ENCODE measurements at regions of chr5 and their contacts with region 1.

Region 1: DNA sequence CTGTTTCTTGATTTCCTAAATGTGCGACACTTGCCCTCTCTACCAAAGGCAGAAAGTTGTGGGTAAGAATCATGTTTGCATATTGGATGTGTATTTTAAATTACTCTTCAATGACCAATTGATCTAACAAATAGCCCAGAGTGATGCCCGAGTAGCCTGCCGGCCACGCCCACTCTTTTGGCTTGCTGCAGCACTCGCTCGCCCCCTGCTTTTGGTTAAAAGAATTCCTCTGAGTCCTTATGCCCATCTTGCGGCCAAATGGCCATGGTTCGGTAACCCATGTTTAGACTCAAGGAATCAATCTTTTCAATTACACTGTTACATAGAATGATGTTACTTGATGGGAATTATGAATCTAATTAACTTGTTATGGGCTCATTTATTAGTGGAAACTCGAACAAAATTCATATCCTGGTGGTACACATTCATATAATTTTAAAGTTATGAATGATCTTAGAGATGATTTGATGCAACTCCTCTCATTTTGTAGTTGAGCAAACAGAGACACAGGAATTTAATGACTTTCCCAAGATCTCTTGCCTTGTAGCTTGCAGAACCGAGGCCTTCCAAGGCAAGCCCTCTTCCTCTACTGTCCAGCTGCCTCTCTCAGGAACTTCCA is 36.5 kb downstream of the PPIC start:
- DNase-seq: peak; percentile 60
- H3K4me3 Mint-ChIP-seq: no peak overlapping the region
- H3K27ac Mint-ChIP-seq: no peak overlapping the region
- H3K4me1 Mint-ChIP-seq: no peaks in the 10 kb centered on the region
- H3K27me3 Mint-ChIP-seq: no peaks in the 10 kb centered on the region

Region 2: GRCh38 chr5:122515709-122516431 is 484.2 kb before region 1 on chr5:
- CTCF ChIA-PET with region 1: no interaction called
- POLR2A ChIA-PET with region 1: no interaction called
- intact Hi-C with region 1: loop called (anchors 10 kb)
- DNase-seq: peak; percentile 10
- H3K4me3 Mint-ChIP-seq: no peak overlapping the region
- H3K27ac Mint-ChIP-seq: no peak overlapping the region
- H3K4me1 Mint-ChIP-seq: no peaks in the 10 kb centered on the region
- H3K27me3 Mint-ChIP-seq: no peaks in the 10 kb centered on the region

Region 3: GRCh38 chr5:122704243-122705036 is 295.6 kb before region 1 on chr5:
- CTCF ChIA-PET with region 1: interaction called, 5 read pairs
- POLR2A ChIA-PET with region 1: no interaction called
- intact Hi-C with region 1: loop called (anchors 10 kb)
- DNase-seq: no peak
- H3K4me3 Mint-ChIP-seq: no peak overlapping the region
- H3K27ac Mint-ChIP-seq: no peak overlapping the region
- H3K4me1 Mint-ChIP-seq: no peaks in the 10 kb centered on the region
- H3K27me3 Mint-ChIP-seq: peaks cover 5% of the 10 kb centered on the region

Region 4: DNA sequence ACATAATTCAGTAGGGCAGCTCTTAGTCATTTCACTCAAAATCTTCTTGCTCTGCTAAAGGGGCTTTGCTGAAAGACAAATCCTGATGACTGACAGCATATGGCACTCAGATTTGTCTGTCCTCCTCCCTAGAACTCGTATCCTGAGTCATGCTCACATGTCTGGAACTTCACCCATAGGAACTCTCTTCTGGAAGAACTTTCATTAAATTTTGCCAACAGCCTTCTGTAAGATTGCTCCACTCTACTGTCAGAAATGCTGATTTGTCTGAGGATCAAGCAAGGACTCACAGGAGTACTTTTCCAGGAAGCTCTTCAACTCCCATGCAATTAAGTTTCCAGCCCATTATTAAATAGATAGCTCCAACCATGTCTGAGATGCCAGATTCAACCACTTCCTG is 285.0 kb before region 1 on chr5:
- CTCF ChIA-PET with region 1: no interaction called
- POLR2A ChIA-PET with region 1: no interaction called
- intact Hi-C with region 1: no loop called
- DNase-seq: no peak
- H3K4me3 Mint-ChIP-seq: no peak overlapping the region
- H3K27ac Mint-ChIP-seq: no peak overlapping the region
- H3K4me1 Mint-ChIP-seq: no peaks in the 10 kb centered on the region
- H3K27me3 Mint-ChIP-seq: peaks cover 13% of the 10 kb centered on the region

Region 5: GRCh38 chr5:122896598-122897282 is 103.3 kb before region 1 on chr5:
- CTCF ChIA-PET with region 1: no interaction called
- POLR2A ChIA-PET with region 1: no interaction called
- intact Hi-C with region 1: loop called (anchors 5 kb)
- DNase-seq: no peak
- H3K4me3 Mint-ChIP-seq: no peak overlapping the region
- H3K27ac Mint-ChIP-seq: no peak overlapping the region
- H3K4me1 Mint-ChIP-seq: peaks cover 2% of the 10 kb centered on the region
- H3K27me3 Mint-ChIP-seq: no peaks in the 10 kb centered on the region

Measured in activated CD4-positive, alpha-beta memory T cell treated with anti-CD3 and anti-CD28 coated beads for 36 hours (primary cell).